Right ventricle myocardium inferior (tissue), 1 donor: ENCODE measurements at regions of chr5 and their contacts with region 1.

Region 1: GRCh38 chr5:119070828-119071572 is at the start of gene DMXL1:
- DNase-seq: peak; percentile 100
- ATAC-seq: peak; percentile 98
- total RNA-seq, gene DMXL1: 22.6 TPM

Region 2: DNA sequence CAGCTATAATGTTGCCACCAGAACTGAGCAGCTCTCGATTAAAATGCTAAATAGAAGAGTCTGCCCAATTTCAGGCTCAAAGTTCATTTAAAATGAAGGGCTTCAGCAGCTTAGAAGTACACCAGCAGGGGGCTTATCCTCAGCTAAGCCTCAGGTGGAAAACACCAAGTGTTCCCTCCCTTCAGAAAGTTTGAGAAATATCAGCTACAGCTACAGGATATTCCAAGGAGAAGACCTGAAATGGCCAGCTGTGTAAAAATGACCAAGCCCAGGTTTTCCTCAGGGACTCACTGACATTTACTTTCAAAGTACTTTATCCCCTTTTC is 478.0 kb before region 1 on chr5:
- intact Hi-C with region 1: no loop called
- DNase-seq: no peak
- ATAC-seq: no peak

Region 3: DNA sequence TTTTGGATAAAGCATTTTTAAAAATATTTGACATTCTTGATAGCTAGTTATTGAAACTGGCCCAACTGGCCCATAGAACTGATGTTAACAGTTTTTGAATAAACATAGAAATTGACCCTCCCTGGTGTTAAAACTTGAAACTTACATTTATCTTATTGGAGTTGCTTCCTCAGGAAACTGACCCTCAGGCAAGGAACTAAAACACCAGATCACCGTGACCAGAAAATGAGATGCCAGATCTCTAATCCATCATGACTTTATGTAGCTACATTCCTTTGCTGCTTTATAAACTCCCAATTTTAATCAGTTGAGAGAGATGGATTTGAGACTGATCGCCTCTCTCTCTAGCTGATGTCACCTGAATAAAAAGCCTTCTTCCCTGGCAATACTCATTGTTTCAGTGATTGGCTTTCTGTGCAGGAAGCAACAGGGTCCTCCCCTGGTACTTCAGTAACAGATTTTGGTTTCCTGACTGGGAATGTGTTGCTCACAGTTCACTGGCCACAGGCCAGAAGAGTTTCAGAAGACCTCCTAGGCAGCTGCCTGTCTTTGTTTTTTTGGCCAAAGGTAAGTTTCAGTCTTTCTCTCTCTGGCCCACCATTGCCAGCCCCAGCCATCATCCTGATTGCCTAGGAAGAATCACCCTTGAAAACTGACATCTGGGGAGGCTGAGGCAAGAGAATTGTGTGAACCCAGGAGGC is 295.1 kb before region 1 on chr5:
- intact Hi-C with region 1: no loop called
- DNase-seq: no peak
- ATAC-seq: no peak

Region 4: GRCh38 chr5:118987988-118988865 is 82.8 kb before region 1 on chr5 and contains the start of gene DTWD2:
- intact Hi-C with region 1: loop called (anchors 2 kb)
- DNase-seq: peak; percentile 97
- ATAC-seq: peak; percentile 98
- total RNA-seq, gene DTWD2: 12.1 TPM

Region 5: DNA sequence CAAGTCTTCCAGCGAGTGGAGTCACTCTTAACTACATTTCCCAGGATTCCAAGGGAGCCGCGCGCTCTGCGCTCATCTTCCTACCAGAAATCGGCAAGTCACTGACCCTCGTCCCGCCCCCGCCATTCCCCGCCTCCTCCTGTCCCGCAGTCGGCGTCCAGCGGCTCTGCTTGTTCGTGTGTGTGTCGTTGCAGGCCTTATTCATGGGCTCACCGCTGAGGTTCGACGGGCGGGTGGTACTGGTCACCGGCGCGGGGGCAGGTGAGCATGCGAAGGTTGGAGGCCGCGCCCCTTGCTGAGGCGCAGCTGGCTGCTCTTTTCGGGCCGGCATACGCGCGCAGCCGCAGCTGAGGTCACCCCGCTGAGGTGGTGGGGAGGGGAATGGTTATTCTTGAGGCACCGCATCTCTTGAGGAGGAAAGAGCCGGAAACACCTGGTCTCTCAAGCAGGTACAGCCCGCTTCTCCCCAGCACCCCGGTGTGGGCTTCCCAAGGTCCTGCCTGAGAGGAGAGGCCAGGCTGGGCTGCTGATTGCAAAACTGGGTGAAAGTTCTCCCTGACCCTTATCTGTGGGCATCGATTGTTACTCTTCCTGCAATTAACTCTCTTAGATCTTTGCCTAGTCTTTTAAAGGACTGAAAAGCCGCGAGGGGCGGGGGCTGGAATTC is 381.5 kb after region 1 on chr5 and contains the start of gene HSD17B4:
- intact Hi-C with region 1: loop called (anchors 2 kb)
- DNase-seq: peak; percentile 96
- ATAC-seq: peak; percentile 96
- total RNA-seq, gene HSD17B4: 297 TPM